ENCODE measurements at regions of chr2 and their contacts with region 1.

Region 1: GRCh38 chr2:138827426-138828054 is 47.4 kb upstream of the NXPH2 start:
- DNase-seq: no peak
- ATAC-seq: peak; percentile 37
- H3K4me3 Mint-ChIP-seq: no peak overlapping the region
- H3K27ac Mint-ChIP-seq: no peak overlapping the region
- H3K4me1 Mint-ChIP-seq: no peaks in the 10 kb centered on the region
- H3K27me3 Mint-ChIP-seq: peaks cover 8% of the 10 kb centered on the region
- CTCF ChIP-seq: peak; percentile 54

Region 2: GRCh38 chr2:137865954-137866540 is 961.5 kb before region 1 on chr2:
- CTCF ChIA-PET with region 1: interaction called, 41 read pairs
- POLR2A ChIA-PET with region 1: interaction called, 3 read pairs
- intact Hi-C with region 1: loop called (anchors 1 kb)
- DNase-seq: peak; percentile 19
- ATAC-seq: peak; percentile 28
- H3K4me3 Mint-ChIP-seq: no peak overlapping the region
- H3K27ac Mint-ChIP-seq: no peak overlapping the region
- H3K4me1 Mint-ChIP-seq: no peaks in the 10 kb centered on the region
- H3K27me3 Mint-ChIP-seq: no peaks in the 10 kb centered on the region
- CTCF ChIP-seq: no peak

Region 3: GRCh38 chr2:137947728-137948336 is 879.7 kb before region 1 on chr2:
- CTCF ChIA-PET with region 1: no interaction called
- POLR2A ChIA-PET with region 1: no interaction called
- intact Hi-C with region 1: loop called (anchors 1 kb)
- DNase-seq: no peak
- ATAC-seq: no peak
- H3K4me3 Mint-ChIP-seq: no peak overlapping the region
- H3K27ac Mint-ChIP-seq: no peak overlapping the region
- H3K4me1 Mint-ChIP-seq: peaks cover 7% of the 10 kb centered on the region
- H3K27me3 Mint-ChIP-seq: no peaks in the 10 kb centered on the region
- CTCF ChIP-seq: no peak

Region 4: DNA sequence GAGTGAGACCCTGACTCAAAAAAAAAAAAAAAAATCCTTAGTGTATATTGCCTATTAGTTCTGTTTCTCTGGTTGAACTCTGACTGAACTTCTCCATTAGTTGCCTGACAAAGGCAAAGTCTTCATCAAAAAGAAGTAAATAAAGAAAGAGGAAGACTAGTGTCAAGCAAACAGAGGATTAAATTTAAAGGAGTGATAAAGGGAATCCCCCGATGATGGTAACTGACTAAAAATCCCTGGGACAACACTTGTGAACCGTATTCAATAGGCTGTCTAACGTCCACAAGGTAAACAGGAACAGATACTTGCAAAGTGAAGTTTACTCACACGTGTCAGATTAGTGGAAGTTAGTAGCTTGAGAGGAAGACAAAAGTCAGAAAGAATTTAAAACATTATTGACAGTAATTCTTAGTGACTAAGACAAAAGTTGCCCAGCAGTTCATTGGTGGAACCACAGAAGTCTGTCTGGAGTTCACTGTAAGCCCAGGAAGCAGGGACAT is 352.2 kb before region 1 on chr2:
- CTCF ChIA-PET with region 1: no interaction called
- POLR2A ChIA-PET with region 1: no interaction called
- intact Hi-C with region 1: loop called (anchors 5 kb)
- DNase-seq: no peak
- ATAC-seq: peak; percentile 76
- H3K4me3 Mint-ChIP-seq: peak overlapping the region; percentile 36
- H3K27ac Mint-ChIP-seq: peak overlapping the region; percentile 51
- H3K4me1 Mint-ChIP-seq: peaks cover 27% of the 10 kb centered on the region
- H3K27me3 Mint-ChIP-seq: no peaks in the 10 kb centered on the region
- CTCF ChIP-seq: no peak